ENCODE measurements at regions of chr1 and their contacts with region 1.

Region 1: GRCh38 chr1:12078938-12079861 is 16.1 kb downstream of the TNFRSF8 start:
- DNase-seq: no peak
- H3K4me3 ChIP-seq: no peak overlapping the region
- H3K27me3 ChIP-seq: no peaks in the 10 kb centered on the region; the same call in none of the 2 replicates
- CTCF ChIP-seq: peak; percentile 76

Region 2: GRCh38 chr1:12067900-12068821 is 11.0 kb before region 1 on chr1:
- CTCF ChIA-PET with region 1: interaction called, 15 read pairs
- POLR2A ChIA-PET with region 1: no interaction called
- DNase-seq: peak; percentile 30
- H3K4me3 ChIP-seq: no peak overlapping the region
- H3K27me3 ChIP-seq: peaks cover 20% of the 10 kb centered on the region
- CTCF ChIP-seq: no peak

Measured in BJ (cell line).